Right ventricle myocardium inferior (tissue), 1 donor: ENCODE measurements at regions of chr1 and their contacts with region 1.

Region 1: DNA sequence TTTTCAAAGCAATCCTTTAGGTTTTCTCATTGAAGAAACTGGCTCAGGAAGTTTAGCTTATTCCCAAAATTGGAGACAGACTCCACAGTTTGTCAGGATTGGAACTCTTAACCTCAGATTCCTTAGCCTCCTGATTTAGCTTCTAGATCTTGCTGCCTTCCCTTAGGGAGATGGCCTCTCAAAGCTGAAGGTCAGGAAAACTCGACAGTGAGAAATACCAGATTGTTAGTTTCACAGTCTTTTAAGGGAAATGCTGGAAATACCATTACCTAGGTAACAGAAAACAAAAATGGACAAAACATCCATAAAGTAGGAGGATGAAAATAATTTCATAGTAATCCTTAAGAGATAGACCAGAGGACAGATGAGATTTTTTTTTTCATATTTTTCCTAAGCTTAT is 7.8 kb downstream of the RASAL2 start:
- DNase-seq: no peak
- ATAC-seq: no peak

Region 2: GRCh38 chr1:178172954-178173353 is 71.3 kb after region 1 on chr1:
- intact Hi-C with region 1: loop called (anchors 5 kb)
- DNase-seq: no peak
- ATAC-seq: no peak